Ascending aorta (tissue), 2 donors: ENCODE measurements at regions of chr9 and their contacts with region 1.

Region 1: GRCh38 chr9:93159601-93160471 is 24.1 kb upstream of the WNK2 start:
- DNase-seq: peak in 1 of 2 donors; percentile 90
- H3K4me3 ChIP-seq: peak overlapping the region in 1 of 2 donors; percentile 29
- H3K27ac ChIP-seq: no peak overlapping the region
- H3K4me1 ChIP-seq: peaks cover 0 to 4% of the 10 kb centered on the region in 2 donors
- H3K27me3 ChIP-seq: no peaks in the 10 kb centered on the region
- CTCF ChIP-seq: peak; percentile 90 to 99 (median 98)

Region 2: GRCh38 chr9:93304574-93305496 is 145.0 kb after region 1 on chr9:
- intact Hi-C with region 1: loop called (anchors 1 kb)
- DNase-seq: peak in 1 of 2 donors; percentile 67
- H3K4me3 ChIP-seq: no peak overlapping the region
- H3K27ac ChIP-seq: peak overlapping the region; percentile 12 to 37
- H3K4me1 ChIP-seq: peaks cover 0 to 3% of the 10 kb centered on the region in 2 donors
- H3K27me3 ChIP-seq: no peaks in the 10 kb centered on the region
- CTCF ChIP-seq: peak; percentile 31 to 63 (median 38)